Lower lobe of right lung (tissue), 2 donors: ENCODE measurements at regions of chr1 and their contacts with region 1.

Region 1: GRCh38 chr1:162056043-162056442 is 13.4 kb upstream of the NOS1AP start:
- DNase-seq: peak; percentile 61
- ATAC-seq: peak; percentile 93 to 96
- H3K4me3 ChIP-seq: no peak overlapping the region
- H3K27ac ChIP-seq: no peak overlapping the region
- H3K4me1 ChIP-seq: no peaks in the 10 kb centered on the region
- H3K27me3 ChIP-seq: no peaks in the 10 kb centered on the region
- CTCF ChIP-seq: peak; percentile 84

Region 2: GRCh38 chr1:162019006-162019405 is 37.0 kb before region 1 on chr1:
- intact Hi-C with region 1: no loop called
- DNase-seq: no peak
- ATAC-seq: peak in 1 of 2 donors; percentile 8
- H3K4me3 ChIP-seq: no peak overlapping the region
- H3K27ac ChIP-seq: no peak overlapping the region
- H3K4me1 ChIP-seq: peaks cover 33% of the 10 kb centered on the region
- H3K27me3 ChIP-seq: peaks cover 15% of the 10 kb centered on the region
- CTCF ChIP-seq: no peak

Region 3: DNA sequence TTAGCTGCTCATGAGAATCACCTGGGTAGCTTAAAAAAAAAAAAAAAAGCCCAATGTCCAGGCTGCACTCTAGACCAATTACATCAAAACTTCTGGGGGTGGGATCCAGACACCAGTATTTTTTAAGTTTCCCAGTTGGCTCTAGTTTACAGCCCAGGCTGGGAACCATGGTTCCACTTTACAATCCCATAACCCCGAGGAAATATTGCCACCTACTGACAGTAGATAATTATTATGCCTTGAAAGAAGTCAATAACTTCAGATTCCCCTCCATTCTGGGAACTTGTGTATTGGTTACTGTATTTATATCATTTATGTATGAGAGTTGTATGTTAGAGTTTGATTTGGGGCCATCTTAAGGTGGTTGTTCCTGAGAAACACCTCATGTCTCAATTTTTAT is 220.4 kb after region 1 on chr1:
- intact Hi-C with region 1: loop called (anchors 5 kb)
- DNase-seq: no peak
- ATAC-seq: peak; percentile 53 to 75
- H3K4me3 ChIP-seq: no peak overlapping the region
- H3K27ac ChIP-seq: no peak overlapping the region
- H3K4me1 ChIP-seq: no peaks in the 10 kb centered on the region
- H3K27me3 ChIP-seq: no peaks in the 10 kb centered on the region
- CTCF ChIP-seq: no peak

Region 4: DNA sequence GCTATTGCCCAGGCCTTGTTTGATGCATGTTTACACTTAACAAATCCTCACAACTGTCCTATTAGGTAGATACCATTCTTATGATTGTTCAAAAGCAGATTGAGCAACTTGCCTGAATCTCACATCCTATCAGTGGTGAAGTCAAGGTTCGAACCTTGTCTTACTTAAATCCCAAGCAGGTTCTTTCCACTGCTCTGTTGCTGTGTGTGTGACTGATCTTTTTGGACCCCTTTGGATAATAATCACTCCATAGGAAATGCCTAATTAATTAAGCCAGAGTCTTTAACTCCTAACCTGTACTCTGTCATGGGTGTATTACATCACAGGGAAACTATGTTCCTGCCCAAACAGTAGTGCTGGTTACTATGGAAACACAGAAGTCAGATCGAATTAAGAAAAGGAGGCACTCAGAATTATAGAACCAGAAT is 236.4 kb after region 1 on chr1:
- intact Hi-C with region 1: no loop called
- DNase-seq: no peak
- ATAC-seq: no peak
- H3K4me3 ChIP-seq: no peak overlapping the region
- H3K27ac ChIP-seq: no peak overlapping the region
- H3K4me1 ChIP-seq: no peaks in the 10 kb centered on the region
- H3K27me3 ChIP-seq: no peaks in the 10 kb centered on the region
- CTCF ChIP-seq: no peak